Endothelial cell of umbilical vein (primary cell): ENCODE measurements at regions of chr10 and their contacts with region 1.

Region 1: DNA sequence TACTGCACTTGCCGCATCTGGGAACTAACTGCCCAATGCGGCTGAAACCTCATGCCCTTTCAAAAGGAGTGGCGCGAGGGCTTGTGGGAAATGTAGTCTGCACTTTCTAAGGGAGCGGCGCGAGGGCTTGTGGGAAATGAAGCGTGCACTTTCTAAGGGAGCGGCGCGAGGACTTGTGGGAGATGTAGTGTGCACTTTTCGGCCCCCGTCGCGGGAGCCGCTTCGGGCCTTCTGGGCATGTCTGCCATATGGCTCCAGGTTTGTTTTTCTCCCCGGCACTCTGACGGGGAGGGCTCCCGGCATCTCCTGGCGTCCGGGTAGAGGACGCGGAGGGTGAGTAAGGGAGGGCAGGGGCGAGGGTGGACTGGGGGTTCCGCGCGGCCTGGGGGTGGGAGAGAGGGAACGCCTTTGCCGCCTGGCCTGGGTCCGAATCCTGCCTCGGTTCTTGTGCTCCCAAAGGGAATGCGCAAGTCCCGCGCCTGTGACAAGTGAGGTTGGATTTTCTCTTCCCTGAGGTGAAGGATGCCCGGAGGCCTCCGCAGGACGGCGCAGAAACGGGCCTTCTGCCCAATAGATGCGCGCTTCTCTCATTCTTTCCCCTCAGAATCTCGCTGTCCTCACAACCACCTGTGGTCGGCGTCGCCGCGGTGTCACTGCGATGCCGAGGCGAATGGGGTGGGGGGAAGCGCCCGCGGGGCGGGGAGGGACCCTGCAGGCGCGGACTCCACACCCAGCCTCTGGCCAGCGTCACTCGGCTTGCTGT is at the start of gene ZNF37A:
- DNase-seq: peak; percentile 96
- H3K4me3 ChIP-seq: peak within 1 kb of the TSS; percentile 29 to 65 (median 45)
- H3K27ac ChIP-seq: peak within 1 kb of the TSS; percentile 18
- H3K4me1 ChIP-seq: no peaks in the 10 kb centered on the region
- H3K27me3 ChIP-seq: no peaks in the 10 kb centered on the region
- CTCF ChIP-seq: no peak
- POLR2A ChIP-seq: peak; percentile 65
- total RNA-seq, gene ZNF37A: 10.4 and 14.5 TPM in 2 replicates

Region 2: GRCh38 chr10:37857287-37858211 is 236.8 kb before region 1 on chr10 and contains the start of gene ZNF248:
- CTCF ChIA-PET with region 1: no interaction called
- POLR2A ChIA-PET with region 1: no interaction called
- dilution Hi-C with region 1: no loop called
- intact Hi-C with region 1: loop called (anchors 2 kb)
- DNase-seq: peak; percentile 97
- H3K4me3 ChIP-seq: peak within 1 kb of the TSS; percentile 51 to 91 (median 64)
- H3K27ac ChIP-seq: peak within 1 kb of the TSS; percentile 71
- H3K4me1 ChIP-seq: peaks cover 11% of the 10 kb centered on the region
- H3K27me3 ChIP-seq: no peaks in the 10 kb centered on the region
- CTCF ChIP-seq: no peak
- POLR2A ChIP-seq: peak; percentile 96
- total RNA-seq, gene ZNF248: 6.4 and 6.5 TPM in 2 replicates